Adrenal gland (tissue), 19 donors: ENCODE measurements at regions of chr10 and their contacts with region 1.

Region 1: GRCh38 chr10:101602761-101603398 is 14.8 kb downstream of the DPCD start:
- DNase-seq: peak; percentile 68 to 91 (median 78)
- H3K4me3 ChIP-seq: no peak overlapping the region
- H3K27ac ChIP-seq: no peak overlapping the region
- H3K4me1 ChIP-seq: peaks cover 0 to 4% of the 10 kb centered on the region in 2 donors
- H3K27me3 ChIP-seq: no peaks in the 10 kb centered on the region
- CTCF ChIP-seq: peak; percentile 73 to 88 (median 86)
- POLR2A ChIP-seq: no peak

Region 2: GRCh38 chr10:101629837-101630632 is 27.2 kb after region 1 on chr10:
- intact Hi-C with region 1: no loop called
- DNase-seq: no peak
- H3K4me3 ChIP-seq: no peak overlapping the region
- H3K27ac ChIP-seq: no peak overlapping the region
- H3K4me1 ChIP-seq: peaks cover 0 to 7% of the 10 kb centered on the region in 2 donors
- H3K27me3 ChIP-seq: no peaks in the 10 kb centered on the region
- CTCF ChIP-seq: no peak
- POLR2A ChIP-seq: no peak

Region 3: DNA sequence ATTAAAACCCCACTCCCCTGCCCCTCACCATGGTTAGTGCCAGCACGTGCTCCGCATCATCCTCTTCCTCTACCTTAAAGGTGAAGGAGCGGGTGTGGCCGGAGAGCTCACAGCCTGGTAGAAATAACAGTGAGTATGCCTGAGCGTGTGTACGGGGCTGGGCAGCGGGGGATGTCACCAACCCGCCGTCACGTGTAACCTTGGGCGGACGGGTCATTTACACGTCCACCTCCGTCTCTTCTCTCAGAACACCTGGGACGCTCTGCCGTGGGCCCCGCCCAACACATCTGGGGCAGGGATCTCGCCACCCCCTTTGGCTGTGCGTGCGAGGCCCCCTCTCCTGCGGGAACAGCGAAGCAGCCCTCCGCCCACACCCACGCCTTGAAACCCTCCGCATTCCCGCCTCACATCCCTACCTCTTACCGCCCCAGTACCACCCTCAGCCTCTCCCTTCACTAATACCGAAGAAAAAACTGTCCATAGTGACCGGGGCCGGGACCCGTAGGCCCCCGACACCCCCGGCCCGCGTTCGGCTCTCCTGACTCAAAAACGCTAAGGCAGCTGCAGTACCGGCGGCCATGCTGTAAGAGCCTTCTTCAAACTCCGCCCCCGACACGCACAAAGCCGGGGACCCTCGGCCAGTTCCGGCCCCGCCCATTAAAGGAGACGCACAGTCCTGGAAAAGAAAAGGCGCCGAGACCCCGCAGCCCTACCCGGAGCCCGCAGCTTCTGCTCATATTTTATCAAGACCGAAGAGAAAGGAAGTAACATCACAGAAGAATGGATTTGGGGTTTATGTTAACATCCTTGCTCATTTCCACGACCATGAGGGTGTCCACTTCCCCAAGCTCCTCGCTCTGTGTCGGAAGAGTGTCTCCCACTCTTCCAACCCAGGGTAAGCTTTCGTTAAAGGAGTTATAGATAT is 180.2 kb after region 1 on chr10 and contains the start of gene NPM3:
- intact Hi-C with region 1: loop called (anchors 2 to 5 kb)
- DNase-seq: peak; percentile 78 to 91 (median 85)
- H3K4me3 ChIP-seq: peak within 1 kb of the TSS; percentile 6 to 88 (median 52)
- H3K27ac ChIP-seq: peak within 1 kb of the TSS in 3 of 5 donors; percentile 11 to 53 (median 17)
- H3K4me1 ChIP-seq: peaks cover 23 to 34% of the 10 kb centered on the region in 2 donors
- H3K27me3 ChIP-seq: peaks cover 8% of the 10 kb centered on the region
- CTCF ChIP-seq: no peak
- POLR2A ChIP-seq: peak in 1 of 2 donors; percentile 45
- total RNA-seq, gene NPM3: 20.6 to 51.5 (median 40.4) TPM